Body of pancreas (tissue), 4 donors: ENCODE measurements at regions of chr7 and their contacts with region 1.

Region 1: DNA sequence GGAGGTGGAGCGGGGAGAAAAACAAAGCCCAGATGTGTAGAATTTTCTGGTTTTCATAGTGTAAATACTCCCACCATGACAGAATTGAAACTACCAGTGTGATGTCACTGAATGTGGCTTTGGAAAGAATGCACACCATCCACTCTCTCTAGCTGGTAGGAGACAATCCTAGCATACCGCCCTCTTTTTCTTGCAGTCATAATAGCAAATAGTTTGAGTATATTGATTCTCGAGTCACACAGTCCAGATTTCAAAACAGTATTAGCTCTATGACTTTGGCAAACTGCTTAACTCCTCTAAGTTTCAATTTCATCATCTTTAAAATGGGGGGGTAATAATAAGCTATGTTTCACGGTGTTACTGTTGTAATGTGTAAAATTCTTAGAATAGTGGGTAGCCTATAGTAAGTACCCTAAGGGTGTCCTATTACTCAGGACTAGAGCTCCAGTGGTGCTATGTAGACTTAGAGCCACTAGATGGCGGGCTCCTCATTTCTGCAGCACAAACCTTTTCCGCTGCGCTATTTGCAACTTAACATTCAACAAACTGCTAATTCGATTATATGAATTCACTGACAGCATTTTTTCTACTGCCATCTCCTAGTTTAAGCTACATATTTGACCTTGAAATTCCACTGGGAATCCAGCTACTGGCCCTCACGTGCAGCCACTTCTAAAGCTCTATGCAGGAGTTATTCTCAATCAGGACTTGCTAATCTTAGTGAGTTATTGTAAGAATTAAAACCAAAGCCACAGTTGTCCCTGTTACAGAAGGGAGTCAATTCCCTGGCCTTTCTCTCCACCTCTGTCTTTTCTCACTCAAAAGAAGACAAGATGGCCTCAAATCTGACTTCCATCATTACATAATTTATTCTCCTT is 18.7 kb downstream of the TAS2R40 start:
- DNase-seq: peak; percentile 73 to 80 (median 78)
- ATAC-seq: peak; percentile 92
- H3K4me3 ChIP-seq: no peak overlapping the region
- H3K27ac ChIP-seq: peak overlapping the region in 1 of 4 donors; percentile 63
- H3K4me1 ChIP-seq: no peaks in the 10 kb centered on the region
- H3K27me3 ChIP-seq: no peaks in the 10 kb centered on the region
- CTCF ChIP-seq: peak; percentile 76 to 95 (median 89)
- POLR2A ChIP-seq: no peak

Region 2: DNA sequence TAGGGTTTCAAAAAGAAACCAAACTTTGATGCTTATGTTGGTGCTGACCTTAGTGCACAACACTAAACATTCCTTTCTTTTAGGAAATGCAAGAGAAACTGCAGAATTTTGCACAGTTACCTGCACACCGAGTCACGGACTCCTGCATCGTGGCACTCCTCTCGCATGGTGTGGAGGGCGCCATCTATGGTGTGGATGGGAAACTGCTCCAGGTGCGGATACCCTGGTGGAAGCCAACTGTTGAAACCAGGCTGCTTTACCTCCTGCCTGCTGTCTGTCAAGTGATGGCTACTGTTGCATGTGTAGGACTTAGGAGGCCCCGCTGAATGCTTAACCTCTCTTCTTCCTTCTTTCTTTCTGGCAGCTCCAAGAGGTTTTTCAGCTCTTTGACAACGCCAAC is 59.3 kb after region 1 on chr7:
- intact Hi-C with region 1: loop called (anchors 5 kb)
- DNase-seq: peak; percentile 52 to 61 (median 54)
- ATAC-seq: peak; percentile 75
- H3K4me3 ChIP-seq: no peak overlapping the region
- H3K27ac ChIP-seq: no peak overlapping the region
- H3K4me1 ChIP-seq: no peaks in the 10 kb centered on the region
- H3K27me3 ChIP-seq: no peaks in the 10 kb centered on the region
- CTCF ChIP-seq: peak; percentile 24 to 57 (median 52)
- POLR2A ChIP-seq: no peak

Region 3: DNA sequence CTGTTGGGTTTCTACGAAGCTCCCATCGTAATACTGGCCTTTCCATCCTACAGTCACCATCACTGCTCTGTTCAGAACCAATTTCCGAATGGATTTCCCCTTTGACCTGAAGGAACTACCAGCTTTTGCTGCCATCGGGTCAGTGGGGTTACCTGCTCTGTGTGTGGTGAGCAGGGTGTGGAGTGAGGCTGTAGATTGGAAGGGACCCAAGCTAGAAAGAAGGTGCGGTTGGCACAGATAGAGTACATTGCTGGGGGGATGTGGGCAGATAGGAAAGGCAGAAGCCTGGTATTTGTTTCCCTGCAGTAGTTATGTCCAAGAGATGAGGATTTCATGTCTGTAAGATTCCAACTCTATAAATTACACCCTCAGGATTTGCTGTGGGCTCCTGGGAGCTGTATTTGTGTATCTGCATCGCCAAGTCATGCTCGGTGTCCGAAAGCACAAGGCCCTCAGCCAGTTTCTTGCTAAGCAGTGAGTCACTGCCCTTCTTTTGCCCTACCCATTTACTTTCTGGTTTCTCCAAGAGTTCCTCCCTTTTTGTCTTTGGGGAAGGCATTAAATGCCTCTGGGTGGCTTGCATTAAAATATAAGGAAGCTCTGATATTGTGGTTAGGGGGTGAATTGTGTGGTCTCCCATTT is 90.8 kb after region 1 on chr7:
- intact Hi-C with region 1: no loop called
- DNase-seq: peak in 1 of 4 donors; percentile 45
- ATAC-seq: no peak
- H3K4me3 ChIP-seq: no peak overlapping the region
- H3K27ac ChIP-seq: no peak overlapping the region
- H3K4me1 ChIP-seq: no peaks in the 10 kb centered on the region
- H3K27me3 ChIP-seq: no peaks in the 10 kb centered on the region
- CTCF ChIP-seq: no peak
- POLR2A ChIP-seq: no peak

Region 4: DNA sequence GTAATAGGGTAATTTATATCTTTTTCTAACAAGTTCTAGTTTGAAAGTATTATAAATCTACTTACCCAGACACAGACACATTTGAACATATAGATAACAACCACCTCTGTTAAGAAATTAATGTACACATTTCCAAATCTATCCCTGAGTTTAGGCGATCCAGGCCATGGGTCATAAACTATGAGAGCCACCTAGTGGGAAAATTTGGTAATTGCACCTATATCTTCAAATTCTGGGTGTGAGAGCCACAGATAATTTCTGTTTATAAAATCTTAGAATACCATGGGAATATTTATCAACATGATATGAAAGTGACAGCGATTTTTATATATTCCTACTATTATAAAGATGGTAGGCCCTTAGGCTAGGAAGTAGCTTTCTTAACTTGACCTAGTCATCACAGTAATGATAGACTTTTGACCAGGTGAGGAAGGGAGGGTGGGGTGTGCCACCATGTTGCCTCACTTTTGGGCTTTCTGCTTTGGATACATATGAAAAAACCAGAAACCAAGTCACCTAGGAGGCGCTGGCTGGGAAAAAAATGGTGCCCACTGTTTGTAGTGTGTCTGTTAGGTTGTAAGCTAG is 176.1 kb after region 1 on chr7:
- intact Hi-C with region 1: loop called (anchors 5 kb)
- DNase-seq: no peak
- ATAC-seq: peak; percentile 47
- H3K4me3 ChIP-seq: no peak overlapping the region
- H3K27ac ChIP-seq: no peak overlapping the region
- H3K4me1 ChIP-seq: peaks cover 10% of the 10 kb centered on the region
- H3K27me3 ChIP-seq: no peaks in the 10 kb centered on the region
- CTCF ChIP-seq: peak; percentile 48 to 80 (median 67)
- POLR2A ChIP-seq: no peak